Transverse colon (tissue), 4 donors: ENCODE measurements at regions of chr16 and their contacts with region 1.

Region 1: GRCh38 chr16:89490387-89491237 is at the start of gene ANKRD11:
- DNase-seq: peak; percentile 99
- H3K4me3 ChIP-seq: peak within 1 kb of the TSS; percentile 93 to 100 (median 99)
- H3K27ac ChIP-seq: peak within 1 kb of the TSS; percentile 98 to 100 (median 100)
- H3K4me1 ChIP-seq: peaks cover 29 to 57% (median 38%) of the 10 kb centered on the region in 4 donors
- H3K27me3 ChIP-seq: no peaks in the 10 kb centered on the region
- CTCF ChIP-seq: no peak
- EP300 ChIP-seq: no peak
- POLR2A ChIP-seq: peak; percentile 88
- total RNA-seq, gene ANKRD11: 109 to 281 (median 142) TPM

Region 2: DNA sequence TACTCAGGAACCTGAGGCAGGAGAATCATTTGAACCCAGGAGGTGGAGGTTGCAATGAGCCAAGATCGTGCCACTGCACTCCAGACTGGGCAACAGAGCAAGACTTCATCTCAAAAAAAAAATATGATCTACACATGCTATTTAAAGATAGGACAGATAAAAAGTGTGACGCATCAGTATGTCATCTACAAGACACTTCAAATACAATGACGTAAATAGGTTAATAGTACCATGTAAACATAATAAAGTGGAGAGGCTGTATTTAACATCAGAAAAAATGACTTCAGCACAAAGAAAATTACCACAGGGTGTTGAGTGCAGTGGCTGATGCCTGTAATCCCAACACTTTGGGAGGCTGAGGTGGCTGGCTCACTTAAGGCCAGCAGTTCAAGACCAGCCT is 252.9 kb before region 1 on chr16:
- in situ Hi-C with region 1: no loop called
- intact Hi-C with region 1: loop called (anchors 5 kb)
- DNase-seq: no peak
- H3K4me3 ChIP-seq: no peak overlapping the region
- H3K27ac ChIP-seq: no peak overlapping the region
- H3K4me1 ChIP-seq: peaks cover 0 to 14% (median 3%) of the 10 kb centered on the region in 4 donors
- H3K27me3 ChIP-seq: no peaks in the 10 kb centered on the region
- CTCF ChIP-seq: no peak
- EP300 ChIP-seq: no peak
- POLR2A ChIP-seq: no peak

Region 3: DNA sequence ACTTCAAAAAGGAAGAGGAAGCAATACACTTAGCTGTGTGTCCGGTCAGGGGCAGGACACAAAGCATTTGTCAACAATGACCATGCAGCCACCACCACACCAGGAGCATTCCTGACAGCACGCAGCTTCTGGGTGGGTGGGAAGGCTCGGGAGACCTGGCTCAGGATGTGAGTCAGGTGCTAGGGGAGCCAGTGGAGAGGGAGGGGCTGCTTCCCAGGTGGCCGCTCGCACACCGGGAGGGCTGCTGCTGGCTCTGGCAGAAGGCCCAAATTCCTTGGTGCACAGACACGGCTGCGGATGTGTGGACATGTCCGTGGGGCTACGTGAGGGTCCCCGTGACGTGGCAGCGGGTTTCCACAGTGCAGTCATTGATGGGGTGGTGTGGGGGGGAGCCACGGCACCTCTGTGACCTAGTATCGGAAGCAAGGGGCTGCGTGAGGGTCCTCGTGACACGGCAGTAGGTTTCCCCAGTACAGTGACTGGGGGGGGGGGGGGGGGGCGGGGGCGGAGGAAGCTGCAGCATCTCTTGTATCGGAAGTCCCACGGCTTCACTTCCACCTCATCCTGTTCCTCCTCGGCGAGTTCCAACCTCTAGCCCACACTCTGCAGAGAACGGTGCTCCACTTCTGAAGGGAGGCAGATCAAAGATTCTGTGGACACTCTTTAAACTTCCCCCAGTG is 160.3 kb before region 1 on chr16:
- in situ Hi-C with region 1: loop called in 1 of 4 experiments (anchors 10 kb)
- intact Hi-C with region 1: loop called (anchors 10 kb)
- DNase-seq: no peak
- H3K4me3 ChIP-seq: no peak overlapping the region
- H3K27ac ChIP-seq: peak overlapping the region in 3 of 4 donors; percentile 4 to 44 (median 23)
- H3K4me1 ChIP-seq: peaks cover 32 to 72% (median 37%) of the 10 kb centered on the region in 4 donors
- H3K27me3 ChIP-seq: no peaks in the 10 kb centered on the region
- CTCF ChIP-seq: no peak
- EP300 ChIP-seq: no peak
- POLR2A ChIP-seq: no peak

Region 4: GRCh38 chr16:89410794-89411309 is 79.8 kb before region 1 on chr16:
- in situ Hi-C with region 1: loop called in 1 of 4 experiments (anchors 10 kb)
- intact Hi-C with region 1: no loop called
- DNase-seq: peak; percentile 40
- H3K4me3 ChIP-seq: no peak overlapping the region
- H3K27ac ChIP-seq: peak overlapping the region; percentile 5 to 46 (median 22)
- H3K4me1 ChIP-seq: peaks cover 41 to 82% (median 55%) of the 10 kb centered on the region in 4 donors
- H3K27me3 ChIP-seq: no peaks in the 10 kb centered on the region
- CTCF ChIP-seq: peak in 2 of 5 experiments; percentile 12 to 41
- EP300 ChIP-seq: no peak
- POLR2A ChIP-seq: no peak